ENCODE measurements at regions of chr9 and their contacts with region 1.

Region 1: GRCh38 chr9:121545875-121546423 is 46.3 kb upstream of the GGTA1 start:
- DNase-seq: peak; percentile 52
- H3K4me3 ChIP-seq: no peak overlapping the region
- H3K27me3 ChIP-seq: peaks cover 6% of the 10 kb centered on the region
- CTCF ChIP-seq: peak; percentile 97

Region 2: GRCh38 chr9:121299467-121300234 is 246.3 kb before region 1 on chr9:
- CTCF ChIA-PET with region 1: no interaction called
- POLR2A ChIA-PET with region 1: no interaction called
- DNase-seq: no peak
- H3K4me3 ChIP-seq: peak overlapping the region; percentile 35
- H3K27me3 ChIP-seq: no peaks in the 10 kb centered on the region
- CTCF ChIP-seq: no peak

Region 3: GRCh38 chr9:121566481-121567465 is 20.8 kb after region 1 on chr9:
- CTCF ChIA-PET with region 1: interaction called, 14 read pairs
- POLR2A ChIA-PET with region 1: no interaction called
- DNase-seq: no peak
- H3K4me3 ChIP-seq: peak overlapping the region; percentile 2; the same call in 1 of the 2 replicates
- H3K27me3 ChIP-seq: no peaks in the 10 kb centered on the region; the same call in none of the 2 replicates
- CTCF ChIP-seq: no peak

Region 4: GRCh38 chr9:121593066-121593465 is 47.1 kb after region 1 on chr9:
- CTCF ChIA-PET with region 1: interaction called, 18 read pairs
- POLR2A ChIA-PET with region 1: no interaction called
- DNase-seq: no peak
- H3K4me3 ChIP-seq: no peak overlapping the region
- H3K27me3 ChIP-seq: peaks cover 8% of the 10 kb centered on the region
- CTCF ChIP-seq: no peak

Region 5: GRCh38 chr9:121640076-121640475 is 94.1 kb after region 1 on chr9:
- CTCF ChIA-PET with region 1: interaction called, 11 read pairs
- POLR2A ChIA-PET with region 1: no interaction called
- DNase-seq: no peak
- H3K4me3 ChIP-seq: no peak overlapping the region
- H3K27me3 ChIP-seq: no peaks in the 10 kb centered on the region; the same call in 1 of the 2 replicates
- CTCF ChIP-seq: peak; percentile 62

Region 6: DNA sequence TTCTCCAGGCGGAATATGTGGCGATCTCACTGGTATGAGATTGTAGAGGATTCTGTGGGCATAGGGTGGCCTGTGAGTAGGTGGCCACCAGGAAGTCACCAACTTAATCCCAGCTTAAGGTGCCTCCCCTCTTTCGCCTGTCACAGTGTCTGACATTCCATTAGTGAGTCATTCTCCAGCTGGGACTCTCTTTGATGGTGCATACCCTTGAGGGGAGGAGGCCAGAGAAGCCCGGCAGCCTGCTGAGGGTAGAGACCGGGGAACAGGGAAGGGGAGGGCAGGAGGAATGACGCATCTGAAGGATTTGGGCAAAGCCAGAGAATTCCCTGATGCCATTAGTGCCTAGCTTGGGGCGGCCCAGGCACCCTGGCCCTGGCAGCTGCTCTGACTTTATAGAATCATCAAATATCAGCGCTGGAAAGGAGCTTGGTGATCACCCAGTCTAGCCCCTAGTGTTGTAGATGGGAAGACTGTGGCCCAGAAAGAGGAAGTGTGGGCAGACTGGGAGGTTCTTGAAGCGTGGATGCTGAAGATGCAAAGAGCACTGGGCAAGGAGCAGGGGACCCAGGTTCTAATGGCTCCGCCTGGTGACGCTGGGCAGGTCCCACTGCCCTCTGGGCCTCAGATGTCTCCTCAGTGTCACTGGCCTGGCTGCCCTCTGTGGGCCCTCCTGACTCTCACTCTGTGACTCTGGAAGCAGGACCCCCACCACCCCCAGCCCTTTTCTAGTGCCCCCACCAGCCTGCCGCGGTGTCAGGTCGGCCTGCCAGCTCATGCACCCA is 146.8 kb after region 1 on chr9:
- CTCF ChIA-PET with region 1: interaction called, 34 read pairs
- POLR2A ChIA-PET with region 1: interaction called, 5 read pairs
- DNase-seq: peak; percentile 37
- H3K4me3 ChIP-seq: no peak overlapping the region
- H3K27me3 ChIP-seq: no peaks in the 10 kb centered on the region; the same call in 1 of the 2 replicates
- CTCF ChIP-seq: no peak

Region 7: DNA sequence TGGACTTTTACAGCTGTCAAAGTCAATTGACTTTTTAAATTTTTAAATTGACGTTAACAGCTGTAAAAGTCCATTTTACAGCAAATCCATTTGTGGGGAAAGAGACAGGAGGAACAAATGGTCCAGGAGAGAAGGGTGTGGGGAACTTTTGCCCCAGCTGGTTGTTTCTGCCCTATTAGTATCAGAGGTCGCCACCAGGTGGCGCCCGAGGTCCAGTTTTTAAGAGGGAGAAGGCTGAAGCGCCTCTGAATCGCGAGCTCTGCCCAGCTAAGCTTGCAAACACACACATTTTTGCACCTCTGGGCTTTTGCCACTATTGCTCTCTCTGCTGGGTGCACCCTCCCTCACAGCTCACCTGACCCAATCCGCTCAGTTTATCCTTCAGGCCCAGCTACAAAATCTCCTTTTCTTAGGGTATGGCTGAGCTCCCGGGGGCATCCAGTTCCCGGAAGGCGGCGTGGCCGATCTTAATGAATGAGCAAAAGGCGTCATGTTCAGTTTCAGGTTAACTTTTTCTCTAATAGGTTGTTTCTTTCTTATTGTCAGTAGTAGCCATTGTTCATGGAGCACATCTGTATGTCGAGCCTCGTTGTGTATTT is 553.4 kb after region 1 on chr9:
- CTCF ChIA-PET with region 1: interaction called, 12 read pairs
- POLR2A ChIA-PET with region 1: no interaction called
- DNase-seq: no peak
- H3K4me3 ChIP-seq: no peak overlapping the region
- H3K27me3 ChIP-seq: no peaks in the 10 kb centered on the region; the same call in 1 of the 2 replicates
- CTCF ChIP-seq: peak; percentile 83

Measured in BJ (cell line).